Activated B cell treated with CpG ODN at 0.5 μM for 24 hours (primary cell): ENCODE measurements at regions of chr1 and their contacts with region 1.

Region 1: GRCh38 chr1:160219062-160219929 is 14.1 kb downstream of the PEA15 start:
- DNase-seq: no peak
- ATAC-seq: no peak
- H3K4me3 Mint-ChIP-seq: no peak overlapping the region
- H3K27ac Mint-ChIP-seq: peak overlapping the region; percentile 20
- H3K4me1 Mint-ChIP-seq: no peaks in the 10 kb centered on the region
- H3K27me3 Mint-ChIP-seq: no peaks in the 10 kb centered on the region
- CTCF ChIP-seq: no peak

Region 2: GRCh38 chr1:160193091-160193819 is 26.0 kb before region 1 on chr1:
- CTCF ChIA-PET with region 1: interaction called, 74 read pairs
- POLR2A ChIA-PET with region 1: interaction called, 3 read pairs
- intact Hi-C with region 1: loop called (anchors 1 kb)
- DNase-seq: peak; percentile 72
- ATAC-seq: peak; percentile 95
- H3K4me3 Mint-ChIP-seq: no peak overlapping the region
- H3K27ac Mint-ChIP-seq: no peak overlapping the region
- H3K4me1 Mint-ChIP-seq: peaks cover 3% of the 10 kb centered on the region
- H3K27me3 Mint-ChIP-seq: no peaks in the 10 kb centered on the region
- CTCF ChIP-seq: peak; percentile 43

Region 3: DNA sequence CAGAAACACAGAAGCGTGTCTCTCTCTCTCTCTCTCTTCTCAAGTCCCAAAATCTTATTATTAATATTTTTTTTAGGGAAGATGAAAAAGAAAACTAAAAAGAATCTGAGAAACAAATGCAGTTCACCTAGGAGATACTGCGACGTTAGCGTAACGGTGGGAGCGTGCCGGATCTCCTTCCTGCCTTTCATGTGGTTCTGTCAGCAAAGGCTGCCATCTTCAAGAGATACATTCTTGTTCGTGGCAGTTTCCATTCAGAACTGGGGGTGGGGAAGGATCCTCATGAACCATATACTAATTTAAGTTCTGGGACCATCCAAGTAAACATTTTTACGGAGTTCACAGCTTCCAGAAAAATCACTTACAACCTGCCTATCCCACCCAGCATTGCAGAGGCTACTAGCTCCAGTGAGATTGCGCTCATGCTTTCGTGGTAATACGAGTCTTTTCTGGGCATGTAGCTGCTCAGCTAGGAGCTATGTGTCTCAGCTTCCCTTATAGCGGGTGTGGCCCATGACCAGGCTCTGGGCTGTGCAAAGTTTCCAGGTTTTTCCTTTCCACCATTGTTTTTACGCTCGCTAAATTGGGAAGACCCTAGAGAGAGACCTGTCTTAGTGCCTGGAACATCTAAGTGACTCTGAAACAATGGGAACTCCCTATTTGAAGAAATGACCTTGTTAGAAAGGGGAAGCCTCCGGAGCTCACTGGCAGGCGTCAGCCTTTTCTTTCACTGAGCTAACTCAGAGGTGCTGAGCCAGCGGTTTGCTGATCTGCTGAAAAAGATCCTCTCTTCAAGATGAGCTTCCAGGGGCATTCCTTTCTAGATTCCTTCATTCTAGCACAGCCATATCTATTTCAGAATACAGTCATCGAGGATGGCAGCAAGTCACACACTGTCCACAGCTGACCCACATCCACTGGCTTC is 410.3 kb after region 1 on chr1:
- CTCF ChIA-PET with region 1: no interaction called
- POLR2A ChIA-PET with region 1: no interaction called
- intact Hi-C with region 1: no loop called
- DNase-seq: no peak
- ATAC-seq: peak; percentile 33
- H3K4me3 Mint-ChIP-seq: peak overlapping the region; percentile 41
- H3K27ac Mint-ChIP-seq: peak overlapping the region; percentile 74
- H3K4me1 Mint-ChIP-seq: peaks cover 96% of the 10 kb centered on the region
- H3K27me3 Mint-ChIP-seq: no peaks in the 10 kb centered on the region
- CTCF ChIP-seq: no peak